Endothelial cell of umbilical vein (primary cell): ENCODE measurements at regions of chr6 and their contacts with region 1.

Region 1: DNA sequence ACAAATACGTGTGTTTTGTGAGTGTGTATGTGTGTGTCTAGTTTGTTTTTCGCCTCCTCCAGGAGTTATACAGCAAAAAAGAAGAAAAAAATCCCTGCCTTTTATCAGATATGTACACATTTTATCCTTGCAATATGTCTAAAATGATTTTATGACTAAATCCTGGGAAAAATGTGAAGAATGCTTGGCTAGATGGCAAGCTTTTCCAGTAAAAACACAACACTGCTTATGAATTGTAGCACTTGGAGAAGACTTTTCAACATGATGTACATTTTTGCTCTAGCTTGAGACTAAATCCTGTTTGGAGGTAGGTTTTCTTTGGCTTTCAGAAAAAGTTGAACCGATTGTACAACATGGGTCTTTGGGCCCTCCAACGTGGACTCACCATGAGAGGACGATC is 160.2 kb downstream of the GMPR start:
- DNase-seq: peak; percentile 69
- H3K4me3 ChIP-seq: no peak overlapping the region
- H3K27ac ChIP-seq: no peak overlapping the region
- H3K4me1 ChIP-seq: no peaks in the 10 kb centered on the region
- H3K27me3 ChIP-seq: no peaks in the 10 kb centered on the region
- CTCF ChIP-seq: no peak
- POLR2A ChIP-seq: no peak

Region 2: DNA sequence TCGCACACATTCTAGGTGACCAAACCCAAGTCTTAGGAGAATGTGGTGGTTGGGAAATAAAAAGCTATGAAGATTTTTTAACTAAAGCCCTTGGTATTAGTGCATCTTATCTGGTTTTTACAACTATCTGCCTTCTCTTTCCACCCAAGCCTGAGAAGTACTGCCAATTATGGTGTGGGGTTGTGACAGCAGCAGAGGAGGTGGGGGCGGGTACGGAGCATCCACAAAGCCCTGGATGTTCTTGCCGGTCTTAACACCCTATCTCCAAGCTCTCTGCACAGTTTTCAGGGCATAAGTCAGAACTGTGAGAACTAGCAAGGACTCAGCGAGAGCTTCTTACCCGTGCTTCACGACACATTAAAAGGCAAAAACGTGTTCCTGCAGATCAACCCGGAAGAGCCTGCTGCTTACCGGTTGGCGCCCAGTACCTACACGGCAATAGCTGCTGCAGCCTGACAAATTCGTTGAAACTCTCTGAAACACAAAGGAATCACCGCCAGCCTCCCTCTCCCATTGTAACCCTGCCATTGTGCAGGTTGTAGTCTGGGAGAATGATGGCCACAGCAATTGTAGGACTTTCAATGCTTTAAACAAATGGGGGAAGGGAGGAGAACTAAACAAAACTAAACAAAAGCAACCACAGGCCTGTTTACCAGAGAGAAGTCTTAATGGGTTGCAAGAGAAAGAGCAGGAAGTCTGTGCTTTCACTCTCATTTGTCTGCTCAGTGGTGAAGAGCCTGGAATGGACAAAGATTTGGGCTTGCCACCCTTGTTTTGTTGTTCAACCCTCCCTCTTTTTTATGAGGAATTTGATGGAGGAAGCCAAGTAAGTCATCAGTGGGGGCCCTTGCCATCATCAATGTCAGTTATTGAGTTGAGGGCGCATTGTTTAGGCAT is 1613.7 kb before region 1 on chr6:
- CTCF ChIA-PET with region 1: no interaction called
- POLR2A ChIA-PET with region 1: no interaction called
- dilution Hi-C with region 1: no loop called
- intact Hi-C with region 1: no loop called
- DNase-seq: no peak
- H3K4me3 ChIP-seq: no peak overlapping the region
- H3K27ac ChIP-seq: no peak overlapping the region
- H3K4me1 ChIP-seq: no peaks in the 10 kb centered on the region
- H3K27me3 ChIP-seq: no peaks in the 10 kb centered on the region
- CTCF ChIP-seq: no peak
- POLR2A ChIP-seq: no peak

Region 3: GRCh38 chr6:16355699-16356446 is 42.7 kb before region 1 on chr6:
- CTCF ChIA-PET with region 1: interaction called, 3 read pairs
- POLR2A ChIA-PET with region 1: no interaction called
- dilution Hi-C with region 1: no loop called
- intact Hi-C with region 1: loop called (anchors 2 kb)
- DNase-seq: peak; percentile 40
- H3K4me3 ChIP-seq: no peak overlapping the region
- H3K27ac ChIP-seq: no peak overlapping the region
- H3K4me1 ChIP-seq: peaks cover 24% of the 10 kb centered on the region
- H3K27me3 ChIP-seq: no peaks in the 10 kb centered on the region
- CTCF ChIP-seq: no peak
- POLR2A ChIP-seq: no peak